Naive thymus-derived CD4-positive, alpha-beta T cell (primary cell): ENCODE measurements at regions of chr1 and their contacts with region 1.

Region 1: DNA sequence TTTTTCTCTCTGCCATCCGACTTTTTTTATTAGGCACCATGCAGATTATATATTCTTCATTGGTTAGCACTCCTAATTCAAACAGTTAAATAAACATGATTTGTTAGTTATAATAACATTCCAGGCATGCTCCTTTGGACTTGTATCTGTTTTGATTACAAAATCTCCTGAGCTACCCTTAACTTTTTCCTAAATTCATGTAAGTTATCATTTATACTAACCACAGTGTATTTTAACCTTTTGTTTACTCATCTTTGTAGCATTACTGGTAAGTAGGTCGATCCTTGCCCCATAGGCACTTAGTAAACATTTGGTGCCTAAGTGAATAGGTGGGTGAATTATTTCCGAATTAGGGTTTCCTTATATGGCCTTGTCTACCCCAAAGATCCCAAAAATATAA is 43.8 kb downstream of the MIER1 start:
- DNase-seq: no peak
- ATAC-seq: no peak
- H3K4me3 ChIP-seq: no peak overlapping the region
- H3K4me3 Mint-ChIP-seq: no peak overlapping the region
- H3K27ac ChIP-seq: no peak overlapping the region
- H3K27ac Mint-ChIP-seq: peak overlapping the region in 7 of 9 donors; percentile 10 to 91 (median 59)
- H3K4me1 ChIP-seq: no peaks in the 10 kb centered on the region
- H3K4me1 Mint-ChIP-seq: peaks cover 12 to 44% (median 31%) of the 10 kb centered on the region in 7 donors
- H3K27me3 ChIP-seq: no peaks in the 10 kb centered on the region
- H3K27me3 Mint-ChIP-seq: no peaks in the 10 kb centered on the region

Region 2: DNA sequence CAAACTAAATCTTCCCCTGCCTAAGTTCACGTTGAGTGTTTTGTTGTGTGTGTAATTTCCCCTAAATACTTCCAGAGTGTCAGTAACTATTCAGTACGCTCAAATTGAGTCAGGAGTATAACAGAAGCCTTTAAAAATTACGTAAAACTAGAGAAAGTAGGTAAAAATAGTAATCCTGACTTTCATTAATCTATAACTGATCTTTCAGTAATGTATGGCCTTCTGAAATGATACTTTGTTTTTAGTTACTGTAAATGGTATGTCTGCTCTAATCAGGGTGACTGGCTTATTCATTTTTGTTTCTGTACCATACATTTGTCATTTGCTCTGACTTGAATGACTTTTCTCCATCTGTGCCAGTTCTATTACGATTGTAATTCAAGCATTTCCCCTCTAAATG is 14.4 kb before region 1 on chr1:
- CTCF ChIA-PET with region 1: interaction called, 3 read pairs
- POLR2A ChIA-PET with region 1: no interaction called
- intact Hi-C with region 1: loop called in 1 of 2 experiments (anchors 2 kb)
- DNase-seq: no peak
- ATAC-seq: no peak
- H3K4me3 ChIP-seq: no peak overlapping the region
- H3K4me3 Mint-ChIP-seq: no peak overlapping the region
- H3K27ac ChIP-seq: no peak overlapping the region
- H3K27ac Mint-ChIP-seq: peak overlapping the region in 6 of 9 donors; percentile 3 to 83 (median 62)
- H3K4me1 ChIP-seq: no peaks in the 10 kb centered on the region
- H3K4me1 Mint-ChIP-seq: peaks cover 9 to 73% (median 56%) of the 10 kb centered on the region in 7 donors
- H3K27me3 ChIP-seq: no peaks in the 10 kb centered on the region
- H3K27me3 Mint-ChIP-seq: no peaks in the 10 kb centered on the region

Region 3: GRCh38 chr1:67005068-67005467 is 36.5 kb after region 1 on chr1:
- CTCF ChIA-PET with region 1: no interaction called
- POLR2A ChIA-PET with region 1: no interaction called
- intact Hi-C with region 1: loop called in 1 of 2 experiments (anchors 1 kb)
- DNase-seq: no peak
- ATAC-seq: no peak
- H3K4me3 ChIP-seq: no peak overlapping the region
- H3K4me3 Mint-ChIP-seq: no peak overlapping the region
- H3K27ac ChIP-seq: no peak overlapping the region
- H3K27ac Mint-ChIP-seq: peak overlapping the region in 6 of 9 donors; percentile 2 to 88 (median 28)
- H3K4me1 ChIP-seq: no peaks in the 10 kb centered on the region
- H3K4me1 Mint-ChIP-seq: peaks cover 1 to 22% (median 14%) of the 10 kb centered on the region in 7 donors
- H3K27me3 ChIP-seq: no peaks in the 10 kb centered on the region
- H3K27me3 Mint-ChIP-seq: no peaks in the 10 kb centered on the region